ENCODE measurements at regions of chr6 and their contacts with region 1.

Region 1: DNA sequence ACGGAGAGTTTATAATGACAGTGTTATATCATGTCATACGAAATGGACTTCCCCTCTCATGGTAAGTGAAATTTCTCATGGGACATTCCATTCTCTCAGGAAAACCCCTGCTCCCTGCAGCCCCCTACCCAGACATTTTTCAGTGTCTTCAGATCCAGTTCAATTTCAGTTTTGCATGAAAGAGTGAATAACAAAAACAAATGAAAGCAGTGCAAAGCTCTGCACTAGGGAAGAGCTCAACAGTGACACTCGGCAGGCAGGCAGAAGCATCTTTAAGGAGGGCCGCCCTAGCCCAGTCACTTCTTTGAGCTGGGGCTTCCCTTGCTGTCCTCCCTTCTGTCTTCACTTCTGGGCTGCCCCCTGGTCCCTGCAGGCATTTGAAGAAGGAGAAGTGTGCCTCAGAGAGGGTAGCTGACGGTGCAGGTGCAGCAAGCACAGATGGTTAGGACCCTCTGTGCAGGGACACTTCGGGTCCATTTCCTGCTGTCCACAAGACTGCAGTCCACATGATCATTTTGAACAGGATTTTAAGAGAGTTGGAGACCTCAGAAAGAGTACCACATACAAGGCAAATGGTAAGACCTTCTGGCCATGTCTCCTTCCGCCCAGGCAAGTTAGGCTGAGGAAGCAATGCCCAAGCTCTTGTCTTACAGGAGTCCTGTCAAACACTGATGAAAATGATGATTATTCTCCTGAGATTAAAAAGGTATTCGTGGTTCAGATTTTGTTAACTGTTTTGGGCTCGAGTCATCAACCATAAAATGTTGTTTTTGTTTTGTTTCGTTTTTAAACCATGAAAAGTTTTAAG is 5.4 kb upstream of the DUSP22 start:
- DNase-seq: peak in 1 of 9 experiments; percentile 34
- ATAC-seq: no peak
- H3K4me3 ChIP-seq: no peak overlapping the region
- H3K4me3 Mint-ChIP-seq: no peak overlapping the region
- H3K27ac ChIP-seq: no peak overlapping the region
- H3K27ac Mint-ChIP-seq: no peak overlapping the region
- H3K4me1 ChIP-seq: peaks cover 22% of the 10 kb centered on the region
- H3K4me1 Mint-ChIP-seq: peaks cover 34% of the 10 kb centered on the region
- H3K27me3 ChIP-seq: no peaks in the 10 kb centered on the region
- H3K27me3 Mint-ChIP-seq: no peaks in the 10 kb centered on the region
- CTCF ChIP-seq: no peak

Region 2: GRCh38 chr6:235763-236360 is 51.0 kb before region 1 on chr6:
- CTCF ChIA-PET with region 1: no interaction called
- POLR2A ChIA-PET with region 1: no interaction called
- intact Hi-C with region 1: loop called (anchors 5 kb)
- DNase-seq: peak in 4 of 9 experiments; percentile 34 to 88 (median 58)
- ATAC-seq: peak; percentile 90
- H3K4me3 ChIP-seq: peak overlapping the region; percentile 33 to 61
- H3K4me3 Mint-ChIP-seq: peak overlapping the region; percentile 76
- H3K27ac ChIP-seq: peak overlapping the region; percentile 44 to 87
- H3K27ac Mint-ChIP-seq: peak overlapping the region; percentile 90
- H3K4me1 ChIP-seq: peaks cover 26% of the 10 kb centered on the region
- H3K4me1 Mint-ChIP-seq: peaks cover 29% of the 10 kb centered on the region
- H3K27me3 ChIP-seq: no peaks in the 10 kb centered on the region
- H3K27me3 Mint-ChIP-seq: no peaks in the 10 kb centered on the region
- CTCF ChIP-seq: no peak

Region 3: DNA sequence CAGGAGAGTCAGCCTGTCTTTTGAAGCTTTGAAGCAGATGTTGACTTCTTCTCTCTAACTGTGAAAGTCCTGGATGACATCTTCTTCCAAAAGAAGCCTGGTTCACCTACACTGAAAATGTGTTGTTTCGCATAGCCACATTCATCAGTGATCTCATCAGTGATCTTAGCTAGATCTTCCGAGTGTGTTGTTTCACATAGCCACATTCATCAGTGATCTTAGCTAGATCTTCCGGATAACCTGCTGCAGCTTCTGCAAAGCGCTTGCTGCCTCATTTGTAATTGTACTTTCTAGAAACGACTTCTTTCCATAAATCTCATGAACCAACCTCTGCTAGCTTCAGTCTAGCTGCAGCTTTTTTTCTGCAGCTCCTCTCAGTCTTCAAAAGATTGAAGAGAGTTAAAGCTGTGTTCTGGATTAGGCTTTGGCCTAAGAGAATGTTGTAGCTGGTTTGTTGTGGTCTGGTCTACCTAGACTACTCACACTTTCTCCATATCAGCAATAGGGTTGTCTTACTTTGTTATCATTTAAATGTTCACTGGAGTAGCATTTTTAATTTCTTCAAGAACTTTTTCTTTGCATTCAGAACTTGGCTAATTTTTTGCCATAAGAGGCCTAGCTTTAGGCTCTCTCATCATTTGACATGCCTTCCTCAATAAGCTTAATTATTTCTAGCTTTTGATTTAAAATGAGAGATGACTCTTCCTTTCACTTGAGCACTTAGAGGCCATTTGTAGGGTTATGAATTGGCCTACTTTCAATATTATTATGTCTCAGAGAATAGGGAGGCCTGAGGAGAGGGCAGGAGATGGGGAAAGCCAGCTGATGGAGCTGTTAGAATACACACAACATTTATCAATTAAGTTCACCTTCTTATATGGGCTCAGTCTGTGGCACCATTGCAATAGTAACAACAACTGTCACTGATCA is 454.8 kb after region 1 on chr6:
- CTCF ChIA-PET with region 1: no interaction called
- POLR2A ChIA-PET with region 1: no interaction called
- intact Hi-C with region 1: no loop called
- DNase-seq: no peak
- ATAC-seq: no peak
- H3K4me3 ChIP-seq: no peak overlapping the region
- H3K4me3 Mint-ChIP-seq: no peak overlapping the region
- H3K27ac ChIP-seq: no peak overlapping the region
- H3K27ac Mint-ChIP-seq: no peak overlapping the region
- H3K4me1 ChIP-seq: no peaks in the 10 kb centered on the region
- H3K4me1 Mint-ChIP-seq: no peaks in the 10 kb centered on the region
- H3K27me3 ChIP-seq: no peaks in the 10 kb centered on the region
- H3K27me3 Mint-ChIP-seq: peaks cover 5% of the 10 kb centered on the region
- CTCF ChIP-seq: no peak